AG04450 (cell line): ENCODE measurements at regions of chr1 and their contacts with region 1.

Region 1: DNA sequence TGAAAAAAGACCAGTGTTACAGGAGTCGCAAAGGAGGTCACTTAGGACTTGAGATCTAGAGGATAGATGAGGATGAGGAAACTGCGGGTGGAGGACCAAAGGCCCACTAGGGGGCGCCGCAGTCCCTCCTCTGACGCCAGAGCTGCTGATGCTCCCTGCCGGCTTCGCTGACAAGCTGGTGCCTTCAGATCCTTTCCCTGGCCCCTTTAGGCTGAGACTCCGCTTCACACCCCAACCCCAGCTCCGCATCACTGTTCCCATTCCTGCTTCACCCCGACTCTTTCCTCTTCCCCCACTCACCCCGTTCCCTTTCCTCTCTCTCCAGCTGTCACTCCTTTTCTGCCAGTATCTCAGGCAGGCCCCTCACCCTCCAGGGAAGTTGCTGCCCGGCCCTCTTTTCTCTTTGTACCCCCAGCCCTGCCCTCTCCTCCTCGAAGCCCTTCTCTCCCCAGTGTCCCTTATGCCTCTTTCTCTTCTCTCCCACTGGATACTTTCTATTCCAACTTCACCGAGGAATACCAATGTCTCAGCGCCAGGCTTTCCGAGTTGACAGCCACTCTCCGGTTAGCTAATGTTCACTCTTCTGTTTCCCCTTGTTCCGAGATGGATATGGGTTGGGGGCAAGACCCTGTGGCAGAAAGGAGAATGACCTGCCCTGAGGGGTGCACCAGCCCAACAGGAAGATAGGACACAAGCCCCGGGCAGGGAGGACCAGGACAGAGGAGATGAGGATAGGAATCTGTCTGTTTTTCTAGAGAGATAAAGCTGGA is 4.5 kb downstream of the KCNJ9 start:
- DNase-seq: peak; percentile 32
- H3K4me3 ChIP-seq: no peak overlapping the region
- H3K27ac ChIP-seq: no peak overlapping the region
- H3K27me3 ChIP-seq: peaks cover 43% of the 10 kb centered on the region
- CTCF ChIP-seq: peak; percentile 87

Region 2: DNA sequence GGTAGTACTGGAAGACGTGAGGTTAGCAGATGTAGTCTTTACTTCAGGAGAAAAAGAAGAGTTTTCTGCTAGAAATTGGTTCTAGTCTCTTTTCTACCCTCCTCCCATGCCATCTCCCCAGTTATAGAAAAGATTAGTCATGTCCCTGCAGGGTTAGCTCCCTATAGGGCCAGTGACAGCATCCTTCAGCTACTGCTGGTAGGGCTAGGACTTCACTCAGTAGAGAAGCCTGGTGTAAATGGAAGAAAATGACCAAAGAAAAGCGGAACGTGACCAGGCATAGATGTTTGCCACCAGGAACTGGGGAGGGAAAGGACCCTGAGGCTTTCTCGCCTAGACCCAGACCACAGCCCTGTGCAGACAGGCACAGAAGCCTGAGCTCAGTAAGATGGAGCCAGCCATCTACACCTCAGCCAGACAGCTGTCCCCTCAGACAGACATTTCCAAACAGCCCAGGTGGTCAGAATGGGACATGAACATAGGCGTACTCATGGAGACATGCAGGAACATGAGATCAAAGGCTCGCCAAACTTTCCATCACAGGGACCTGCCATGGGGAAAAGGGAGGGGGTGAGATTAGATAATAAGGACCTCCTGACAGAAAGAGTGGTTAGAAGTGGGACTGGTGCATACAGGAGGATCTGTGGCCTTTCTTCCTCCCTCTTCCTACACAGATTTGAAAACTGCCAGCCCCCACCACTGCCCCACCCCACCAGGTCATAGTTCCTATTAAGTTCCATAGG is 108.3 kb before region 1 on chr1:
- CTCF ChIA-PET with region 1: no interaction called
- POLR2A ChIA-PET with region 1: no interaction called
- DNase-seq: no peak
- H3K4me3 ChIP-seq: no peak overlapping the region
- H3K27ac ChIP-seq: no peak overlapping the region
- H3K27me3 ChIP-seq: peaks cover 28% of the 10 kb centered on the region
- CTCF ChIP-seq: no peak

Region 3: GRCh38 chr1:160046494-160047110 is 39.3 kb before region 1 on chr1:
- CTCF ChIA-PET with region 1: interaction called, 57 read pairs
- POLR2A ChIA-PET with region 1: no interaction called
- DNase-seq: no peak
- H3K4me3 ChIP-seq: no peak overlapping the region
- H3K27ac ChIP-seq: no peak overlapping the region
- H3K27me3 ChIP-seq: peaks cover 36% of the 10 kb centered on the region
- CTCF ChIP-seq: peak; percentile 63

Region 4: GRCh38 chr1:160070243-160071163 is 15.4 kb before region 1 on chr1:
- CTCF ChIA-PET with region 1: interaction called, 56 read pairs
- POLR2A ChIA-PET with region 1: no interaction called
- DNase-seq: no peak
- H3K4me3 ChIP-seq: peak overlapping the region; percentile 62
- H3K27ac ChIP-seq: no peak overlapping the region
- H3K27me3 ChIP-seq: peaks cover 67% of the 10 kb centered on the region
- CTCF ChIP-seq: no peak

Region 5: GRCh38 chr1:160219062-160219929 is 133.4 kb after region 1 on chr1:
- CTCF ChIA-PET with region 1: interaction called, 64 read pairs
- POLR2A ChIA-PET with region 1: no interaction called
- DNase-seq: peak; percentile 55
- H3K4me3 ChIP-seq: no peak overlapping the region
- H3K27ac ChIP-seq: peak overlapping the region; percentile 71
- H3K27me3 ChIP-seq: no peaks in the 10 kb centered on the region
- CTCF ChIP-seq: peak; percentile 84

Region 6: GRCh38 chr1:160244209-160244608 is 158.3 kb after region 1 on chr1:
- CTCF ChIA-PET with region 1: interaction called, 73 read pairs
- POLR2A ChIA-PET with region 1: no interaction called
- DNase-seq: no peak
- H3K4me3 ChIP-seq: no peak overlapping the region
- H3K27ac ChIP-seq: no peak overlapping the region
- H3K27me3 ChIP-seq: no peaks in the 10 kb centered on the region
- CTCF ChIP-seq: no peak